Activated CD4-positive, alpha-beta memory T cell treated with anti-CD3 and anti-CD28 coated beads, Interleukin-2, amount 10 ng/mL, durations not matched to agents 7 days and 5 days (primary cell): ENCODE measurements at regions of chr5 and their contacts with region 1.

Region 1: DNA sequence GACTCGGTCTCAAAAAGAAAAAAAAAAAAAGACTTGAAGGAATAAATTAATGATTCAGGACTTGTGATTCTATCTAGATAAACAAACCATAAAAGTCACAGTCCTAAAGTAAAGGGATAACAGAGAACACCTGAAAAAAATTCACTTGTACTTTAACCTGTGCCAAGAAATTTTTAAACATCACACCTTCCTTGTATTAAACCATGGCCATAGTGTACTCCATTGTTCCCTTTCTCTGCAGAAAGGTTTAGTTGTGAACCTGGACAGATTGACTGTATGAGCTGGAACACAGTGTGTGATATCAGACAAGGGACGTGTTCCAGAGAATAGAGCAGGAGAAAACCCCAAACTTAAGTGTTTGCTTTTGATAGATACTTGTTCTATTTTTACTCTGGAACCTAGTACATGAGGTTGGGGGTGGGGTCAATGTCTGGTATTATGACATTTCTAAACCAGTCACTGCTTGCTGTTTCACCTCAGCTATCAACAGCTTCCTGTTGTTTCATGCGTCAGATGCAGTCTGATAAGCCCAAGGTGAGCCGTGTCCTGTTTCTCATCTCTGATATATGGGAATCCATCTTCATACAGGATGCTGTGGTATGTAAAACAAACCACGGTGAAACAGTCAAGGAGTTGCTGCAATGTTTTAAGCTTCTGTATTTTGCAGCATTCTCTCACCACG is 62.5 kb upstream of the ITGA1 start:
- DNase-seq: peak; percentile 82
- H3K4me3 Mint-ChIP-seq: peak overlapping the region; percentile 15
- H3K27ac Mint-ChIP-seq: peak overlapping the region; percentile 89
- H3K4me1 Mint-ChIP-seq: peaks cover 55% of the 10 kb centered on the region
- H3K27me3 Mint-ChIP-seq: no peaks in the 10 kb centered on the region

Region 2: DNA sequence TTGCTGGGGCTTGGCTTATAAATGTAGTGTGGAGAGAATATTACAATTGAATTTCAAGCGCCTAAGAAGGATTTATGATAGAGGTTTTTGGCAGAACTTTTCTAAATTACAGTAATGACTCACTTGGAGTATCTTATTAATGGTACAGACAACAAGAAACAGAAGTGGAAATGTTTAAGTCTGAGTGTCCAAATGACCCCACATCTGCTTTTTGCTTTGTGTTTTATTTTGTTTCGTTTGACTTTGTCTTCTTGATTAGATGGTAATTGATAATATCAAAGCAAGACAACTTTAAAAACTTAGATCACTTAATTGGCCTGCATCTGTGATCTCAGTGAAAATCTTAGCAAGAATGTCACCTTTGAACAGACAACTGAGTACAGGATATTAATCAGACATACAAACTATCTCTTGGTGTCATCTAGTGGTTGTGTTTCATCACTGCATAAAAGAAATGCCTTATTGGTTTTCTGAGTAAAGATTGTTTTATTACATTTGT is 764.5 kb before region 1 on chr5:
- CTCF ChIA-PET with region 1: no interaction called
- POLR2A ChIA-PET with region 1: no interaction called
- DNase-seq: no peak
- H3K4me3 Mint-ChIP-seq: no peak overlapping the region
- H3K27ac Mint-ChIP-seq: no peak overlapping the region
- H3K4me1 Mint-ChIP-seq: no peaks in the 10 kb centered on the region
- H3K27me3 Mint-ChIP-seq: no peaks in the 10 kb centered on the region

Region 3: GRCh38 chr5:52531105-52531504 is 194.1 kb before region 1 on chr5:
- CTCF ChIA-PET with region 1: no interaction called
- POLR2A ChIA-PET with region 1: no interaction called
- DNase-seq: no peak
- H3K4me3 Mint-ChIP-seq: no peak overlapping the region
- H3K27ac Mint-ChIP-seq: no peak overlapping the region
- H3K4me1 Mint-ChIP-seq: no peaks in the 10 kb centered on the region
- H3K27me3 Mint-ChIP-seq: peaks cover 2% of the 10 kb centered on the region

Region 4: DNA sequence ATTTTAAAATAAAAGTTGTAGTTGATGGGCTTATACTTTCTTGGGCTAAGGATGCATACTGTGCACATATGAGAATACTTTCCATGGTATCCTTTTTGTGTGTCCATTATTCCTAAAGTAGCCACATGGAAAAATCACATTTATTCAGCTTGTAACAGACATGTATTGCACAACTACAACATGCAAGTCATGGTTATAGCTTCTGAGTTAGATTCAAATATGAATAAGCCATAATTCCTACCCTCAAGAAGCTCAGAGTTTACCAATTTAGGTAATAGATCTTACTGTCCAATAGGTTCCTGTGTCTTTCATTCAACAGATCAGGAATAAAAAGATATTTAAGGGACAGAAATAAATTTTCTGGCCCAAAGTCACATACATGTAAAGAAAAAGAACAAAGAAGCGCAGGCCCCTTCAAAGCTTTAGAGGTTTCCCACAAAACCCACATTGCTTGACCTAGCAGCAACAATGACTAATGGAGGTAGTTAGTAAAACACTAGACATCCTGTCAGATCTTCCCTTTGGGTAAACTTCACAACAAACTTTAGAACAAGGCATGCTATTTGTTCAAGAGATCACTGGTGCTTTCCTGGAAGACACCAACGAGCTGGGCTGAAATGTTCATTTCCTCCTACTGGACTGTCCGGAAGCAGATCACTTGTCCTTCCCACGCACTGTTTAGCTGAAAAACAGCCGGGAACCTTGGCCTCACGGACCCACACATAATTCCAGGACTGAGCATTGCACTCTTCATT is 15.9 kb before region 1 on chr5:
- CTCF ChIA-PET with region 1: interaction called, 4 read pairs
- POLR2A ChIA-PET with region 1: interaction called, 16 read pairs
- DNase-seq: peak; percentile 43
- H3K4me3 Mint-ChIP-seq: peak overlapping the region; percentile 1
- H3K27ac Mint-ChIP-seq: peak overlapping the region; percentile 88
- H3K4me1 Mint-ChIP-seq: peaks cover 68% of the 10 kb centered on the region
- H3K27me3 Mint-ChIP-seq: no peaks in the 10 kb centered on the region

Region 5: GRCh38 chr5:52743970-52744369 is 18.8 kb after region 1 on chr5:
- CTCF ChIA-PET with region 1: interaction called, 7 read pairs
- POLR2A ChIA-PET with region 1: interaction called, 24 read pairs
- DNase-seq: peak; percentile 64
- H3K4me3 Mint-ChIP-seq: no peak overlapping the region
- H3K27ac Mint-ChIP-seq: peak overlapping the region; percentile 84
- H3K4me1 Mint-ChIP-seq: peaks cover 62% of the 10 kb centered on the region
- H3K27me3 Mint-ChIP-seq: peaks cover 5% of the 10 kb centered on the region

Region 6: DNA sequence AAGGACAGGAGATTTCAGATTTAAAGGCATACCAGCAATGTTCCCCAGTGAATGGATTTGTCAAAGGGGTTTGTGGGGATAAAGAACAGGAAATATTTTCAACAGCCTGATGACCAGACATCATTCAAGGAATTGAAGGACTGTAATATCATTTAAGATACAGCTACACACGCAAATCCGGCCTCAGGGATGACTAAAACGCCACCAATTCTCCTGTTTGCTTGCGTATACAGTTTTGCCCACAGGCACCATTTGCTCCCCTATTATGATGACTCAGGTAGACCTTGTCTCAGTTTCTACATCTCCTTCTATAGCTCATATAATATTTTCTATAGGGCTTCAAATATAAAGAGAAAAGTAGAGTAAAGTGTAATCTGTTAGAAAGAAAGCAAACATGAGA is 32.8 kb after region 1 on chr5:
- CTCF ChIA-PET with region 1: no interaction called
- POLR2A ChIA-PET with region 1: no interaction called
- DNase-seq: no peak
- H3K4me3 Mint-ChIP-seq: no peak overlapping the region
- H3K27ac Mint-ChIP-seq: no peak overlapping the region
- H3K4me1 Mint-ChIP-seq: no peaks in the 10 kb centered on the region
- H3K27me3 Mint-ChIP-seq: peaks cover 5% of the 10 kb centered on the region

Region 7: GRCh38 chr5:52799983-52800393 is 74.8 kb after region 1 on chr5:
- CTCF ChIA-PET with region 1: interaction called, 6 read pairs
- POLR2A ChIA-PET with region 1: interaction called, 37 read pairs
- DNase-seq: peak; percentile 96
- H3K4me3 Mint-ChIP-seq: peak overlapping the region; percentile 97
- H3K27ac Mint-ChIP-seq: peak overlapping the region; percentile 97
- H3K4me1 Mint-ChIP-seq: peaks cover 51% of the 10 kb centered on the region
- H3K27me3 Mint-ChIP-seq: peaks cover 5% of the 10 kb centered on the region

Region 8: GRCh38 chr5:53694520-53695022 is 969.4 kb after region 1 on chr5:
- CTCF ChIA-PET with region 1: no interaction called
- POLR2A ChIA-PET with region 1: no interaction called
- DNase-seq: no peak
- H3K4me3 Mint-ChIP-seq: no peak overlapping the region
- H3K27ac Mint-ChIP-seq: no peak overlapping the region
- H3K4me1 Mint-ChIP-seq: no peaks in the 10 kb centered on the region
- H3K27me3 Mint-ChIP-seq: no peaks in the 10 kb centered on the region